ENCODE measurements at regions of chr22 and their contacts with region 1.

Region 1: GRCh38 chr22:31496007-31496734 is at the start of gene SFI1:
- DNase-seq: peak; percentile 89 to 96 (median 94)
- H3K4me3 ChIP-seq: peak within 1 kb of the TSS; percentile 57 to 98 (median 91)
- H3K27ac ChIP-seq: peak within 1 kb of the TSS; percentile 44 to 94 (median 85)
- H3K27me3 ChIP-seq: no peaks in the 10 kb centered on the region
- CTCF ChIP-seq: peak in 53 of 56 donors; percentile 28 to 77 (median 50)
- total RNA-seq, gene SFI1: 34.7 to 122 (median 64.4) TPM

Region 2: GRCh38 chr22:31623592-31624304 is 127.6 kb after region 1 on chr22:
- intact Hi-C with region 1: no loop called
- DNase-seq: peak in 1 of 10 donors; percentile 52
- H3K4me3 ChIP-seq: peak overlapping the region in 55 of 59 donors; percentile 9 to 71 (median 56)
- H3K27ac ChIP-seq: peak overlapping the region in 58 of 59 donors; percentile 6 to 97 (median 90)
- H3K27me3 ChIP-seq: no peaks in the 10 kb centered on the region
- CTCF ChIP-seq: no peak

Region 3: GRCh38 chr22:31661851-31662656 is 165.9 kb after region 1 on chr22 and contains the start of gene PISD:
- intact Hi-C with region 1: loop called in 1 of 2 experiments (anchors 10 kb)
- DNase-seq: peak; percentile 88 to 95 (median 94)
- H3K4me3 ChIP-seq: peak within 1 kb of the TSS; percentile 58 to 100 (median 93)
- H3K27ac ChIP-seq: peak within 1 kb of the TSS in 53 of 59 donors; percentile 0 to 92 (median 70)
- H3K27me3 ChIP-seq: no peaks in the 10 kb centered on the region
- CTCF ChIP-seq: peak in 25 of 56 donors; percentile 7 to 47 (median 22)
- total RNA-seq, gene PISD: 48.4 to 108 (median 75.5) TPM

Region 4: DNA sequence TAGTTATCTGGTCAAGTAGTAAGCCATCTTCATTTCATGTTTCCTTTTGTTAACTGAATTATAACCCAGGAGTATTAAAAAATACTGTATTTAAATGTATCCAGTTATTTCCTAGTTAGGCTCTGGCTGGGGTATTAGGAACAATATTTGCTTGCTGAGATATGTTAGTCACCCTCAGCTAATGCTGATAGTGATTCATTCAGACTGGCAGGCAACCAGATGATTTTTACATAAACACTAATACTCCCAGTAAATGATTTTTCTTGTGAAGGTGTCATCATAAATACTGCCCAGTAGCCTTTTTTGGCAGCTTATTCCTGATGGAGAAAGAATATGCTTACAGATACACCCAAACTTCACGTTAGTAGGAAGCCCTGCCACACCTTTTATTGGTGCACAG is 456.3 kb after region 1 on chr22:
- intact Hi-C with region 1: loop called in 1 of 2 experiments (anchors 10 kb)
- DNase-seq: no peak
- H3K4me3 ChIP-seq: peak overlapping the region in 27 of 59 donors; percentile 1 to 92 (median 24)
- H3K27ac ChIP-seq: peak overlapping the region in 43 of 59 donors; percentile 10 to 86 (median 63)
- H3K27me3 ChIP-seq: no peaks in the 10 kb centered on the region
- CTCF ChIP-seq: no peak